Activated CD8-positive, alpha-beta T cell treated with anti-CD3 and anti-CD28 coated beads for 36 hours (primary cell): ENCODE measurements at regions of chr4 and their contacts with region 1.

Region 1: GRCh38 chr4:742742-743311 is 37.2 kb downstream of the PCGF3 start:
- DNase-seq: peak; percentile 84
- ATAC-seq: peak; percentile 97
- H3K4me3 Mint-ChIP-seq: no peak overlapping the region
- H3K27ac Mint-ChIP-seq: no peak overlapping the region
- H3K4me1 Mint-ChIP-seq: no peaks in the 10 kb centered on the region
- H3K27me3 Mint-ChIP-seq: no peaks in the 10 kb centered on the region
- CTCF ChIP-seq: peak; percentile 96

Region 2: GRCh38 chr4:674172-675035 is 68.4 kb before region 1 on chr4 and contains the starts of genes ATP5ME and MYL5:
- CTCF ChIA-PET with region 1: no interaction called
- POLR2A ChIA-PET with region 1: no interaction called
- intact Hi-C with region 1: no loop called
- DNase-seq: peak; percentile 97
- ATAC-seq: peak; percentile 92
- H3K4me3 Mint-ChIP-seq: peak within 1 kb of the TSS; percentile 84
- H3K27ac Mint-ChIP-seq: peak within 1 kb of the TSS; percentile 85
- H3K4me1 Mint-ChIP-seq: peaks cover 13% of the 10 kb centered on the region
- H3K27me3 Mint-ChIP-seq: no peaks in the 10 kb centered on the region
- CTCF ChIP-seq: peak; percentile 78
- total RNA-seq, gene ATP5ME: 221 to 234 TPM
- total RNA-seq, gene MYL5: 14.7 to 17.8 TPM

Region 3: GRCh38 chr4:692771-693554 is 49.9 kb before region 1 on chr4:
- CTCF ChIA-PET with region 1: no interaction called
- POLR2A ChIA-PET with region 1: no interaction called
- intact Hi-C with region 1: no loop called
- DNase-seq: no peak
- ATAC-seq: no peak
- H3K4me3 Mint-ChIP-seq: no peak overlapping the region
- H3K27ac Mint-ChIP-seq: no peak overlapping the region
- H3K4me1 Mint-ChIP-seq: no peaks in the 10 kb centered on the region
- H3K27me3 Mint-ChIP-seq: peaks cover 3% of the 10 kb centered on the region
- CTCF ChIP-seq: no peak

Region 4: GRCh38 chr4:766152-766515 is 23.3 kb after region 1 on chr4:
- CTCF ChIA-PET with region 1: interaction called, 17 read pairs
- POLR2A ChIA-PET with region 1: no interaction called
- intact Hi-C with region 1: no loop called
- DNase-seq: no peak
- ATAC-seq: peak; percentile 13
- H3K4me3 Mint-ChIP-seq: no peak overlapping the region
- H3K27ac Mint-ChIP-seq: peak overlapping the region; percentile 59
- H3K4me1 Mint-ChIP-seq: peaks cover 17% of the 10 kb centered on the region
- H3K27me3 Mint-ChIP-seq: no peaks in the 10 kb centered on the region
- CTCF ChIP-seq: no peak

Region 5: DNA sequence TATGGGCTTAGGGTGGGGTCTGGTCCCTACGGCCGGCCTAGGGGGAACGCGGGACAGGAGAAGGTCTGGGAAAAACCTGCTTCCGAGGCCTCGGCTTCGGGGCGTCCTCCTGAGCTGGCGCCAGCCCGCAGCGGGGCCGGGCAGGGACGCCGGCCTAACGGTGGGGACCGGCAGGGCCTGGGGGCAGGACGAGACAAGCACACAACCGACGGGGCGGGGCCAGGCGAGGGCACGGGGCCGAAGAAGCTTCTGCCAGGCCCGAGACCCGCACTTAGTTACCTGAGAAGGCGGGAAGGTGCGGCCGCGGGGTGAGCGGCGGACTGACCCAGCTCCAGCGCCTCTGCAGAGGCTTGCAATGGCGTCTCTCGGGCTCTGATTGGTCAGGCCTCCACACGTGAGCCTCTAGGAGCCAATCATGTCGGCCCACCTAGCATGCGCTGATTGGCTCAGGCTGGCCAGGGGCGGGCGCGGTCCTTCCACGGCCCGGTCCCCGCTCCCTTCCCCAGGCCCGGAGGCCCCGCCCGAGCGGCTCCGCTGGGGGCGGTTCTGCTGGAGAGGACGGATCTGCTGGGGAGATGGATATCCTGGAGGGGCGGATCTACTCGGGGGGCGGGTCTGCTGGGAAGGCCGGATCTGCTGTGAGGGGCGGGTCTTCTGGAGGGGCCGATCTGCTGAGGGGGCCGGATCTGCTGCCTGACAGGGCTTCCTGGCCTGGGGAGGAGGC is 38.8 kb after region 1 on chr4:
- CTCF ChIA-PET with region 1: interaction called, 12 read pairs
- POLR2A ChIA-PET with region 1: no interaction called
- intact Hi-C with region 1: no loop called
- DNase-seq: peak; percentile 98
- ATAC-seq: peak; percentile 96
- H3K4me3 Mint-ChIP-seq: peak overlapping the region; percentile 81
- H3K27ac Mint-ChIP-seq: peak overlapping the region; percentile 85
- H3K4me1 Mint-ChIP-seq: peaks cover 41% of the 10 kb centered on the region
- H3K27me3 Mint-ChIP-seq: peaks cover 15% of the 10 kb centered on the region
- CTCF ChIP-seq: no peak

Region 6: DNA sequence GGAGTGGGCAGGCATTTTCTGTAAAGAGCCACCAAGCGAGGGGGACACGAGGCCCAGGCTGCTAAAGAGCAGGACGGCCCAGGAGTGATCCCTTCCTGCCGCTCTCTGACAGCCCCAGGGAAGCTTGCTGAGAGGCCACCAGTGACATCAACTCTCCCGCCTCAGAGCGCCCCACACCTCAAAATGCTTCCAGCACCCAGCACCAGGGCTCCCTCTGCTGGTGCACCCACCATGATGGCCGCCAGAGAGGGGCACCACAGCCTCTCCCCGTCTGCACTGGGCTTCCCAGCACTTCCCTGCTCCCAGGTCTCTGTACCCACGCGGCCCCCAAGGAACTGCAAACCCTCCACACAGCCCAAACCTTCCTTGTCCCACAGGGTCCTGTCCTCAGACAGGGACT is 148.9 kb after region 1 on chr4:
- CTCF ChIA-PET with region 1: interaction called, 10 read pairs
- POLR2A ChIA-PET with region 1: no interaction called
- intact Hi-C with region 1: no loop called
- DNase-seq: peak; percentile 54
- ATAC-seq: peak; percentile 53
- H3K4me3 Mint-ChIP-seq: no peak overlapping the region
- H3K27ac Mint-ChIP-seq: no peak overlapping the region
- H3K4me1 Mint-ChIP-seq: no peaks in the 10 kb centered on the region
- H3K27me3 Mint-ChIP-seq: no peaks in the 10 kb centered on the region
- CTCF ChIP-seq: no peak

Region 7: GRCh38 chr4:986879-987623 is 244.2 kb after region 1 on chr4 and contains the start of gene IDUA:
- CTCF ChIA-PET with region 1: interaction called, 44 read pairs
- POLR2A ChIA-PET with region 1: no interaction called
- intact Hi-C with region 1: no loop called
- DNase-seq: peak; percentile 90
- ATAC-seq: peak; percentile 92
- H3K4me3 Mint-ChIP-seq: peak within 1 kb of the TSS; percentile 79
- H3K27ac Mint-ChIP-seq: peak within 1 kb of the TSS; percentile 71
- H3K4me1 Mint-ChIP-seq: peaks cover 22% of the 10 kb centered on the region
- H3K27me3 Mint-ChIP-seq: no peaks in the 10 kb centered on the region
- CTCF ChIP-seq: peak; percentile 83
- total RNA-seq, gene IDUA: 4.8 to 5.4 TPM